Motor neuron (in vitro differentiated cells): ENCODE measurements at regions of chr11 and their contacts with region 1.

Region 1: GRCh38 chr11:88543902-88544655 is 206.5 kb upstream of the CTSC start:
- ATAC-seq: peak; percentile 91 to 100 (median 100)
- H3K4me3 ChIP-seq: no peak overlapping the region
- H3K27ac ChIP-seq: no peak overlapping the region
- H3K4me1 ChIP-seq: no peaks in the 10 kb centered on the region

Region 2: GRCh38 chr11:87352759-87353707 is 1191.0 kb before region 1 on chr11:
- in situ Hi-C with region 1: loop called in 1 of 9 experiments (anchors 25 kb)
- ATAC-seq: peak; percentile 94 to 99 (median 98)
- H3K4me3 ChIP-seq: no peak overlapping the region
- H3K27ac ChIP-seq: no peak overlapping the region
- H3K4me1 ChIP-seq: no peaks in the 10 kb centered on the region

Region 3: GRCh38 chr11:87878373-87878779 is 665.7 kb before region 1 on chr11:
- in situ Hi-C with region 1: loop called in 1 of 9 experiments (anchors 25 kb)
- ATAC-seq: peak in 3 of 8 experiments; percentile 69 to 78 (median 73)
- H3K4me3 ChIP-seq: no peak overlapping the region
- H3K27ac ChIP-seq: no peak overlapping the region
- H3K4me1 ChIP-seq: peaks cover 0 to 3% of the 10 kb centered on the region in 2 donors

Region 4: DNA sequence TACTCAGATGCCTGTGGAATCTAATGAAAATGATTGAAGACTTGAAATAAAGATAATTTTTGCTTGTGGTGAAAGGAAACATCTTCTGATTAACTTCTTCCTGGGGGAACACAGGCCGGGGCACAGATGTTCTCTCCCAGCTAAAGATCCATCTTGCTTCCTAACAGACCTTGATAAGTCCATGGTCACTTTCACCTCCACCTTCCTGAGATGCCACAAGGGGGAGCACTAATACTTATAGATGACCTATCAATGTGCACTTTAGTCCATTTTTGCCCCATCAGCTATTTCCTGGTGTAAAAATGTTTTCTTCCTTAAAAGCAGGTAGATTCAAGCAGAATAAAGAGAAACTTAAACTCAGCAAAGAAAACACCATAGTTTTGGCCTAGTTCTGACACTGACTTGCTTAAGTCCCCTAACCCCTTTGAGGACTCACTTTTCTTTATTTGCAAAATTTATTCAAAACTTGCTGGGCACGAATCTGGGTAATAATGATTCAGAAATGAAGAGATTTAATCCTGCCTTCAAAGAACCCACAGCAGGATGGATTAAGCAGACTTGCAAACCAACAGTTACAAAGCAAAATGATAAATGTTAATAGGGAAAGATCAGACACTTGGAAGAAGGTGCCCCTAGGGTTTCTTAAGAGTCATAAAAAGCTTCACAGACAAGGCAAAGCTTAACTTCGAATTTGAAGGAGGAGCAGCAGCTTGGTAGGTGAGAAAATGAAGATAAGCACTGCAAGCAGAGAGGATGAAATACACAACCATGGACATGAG is 527.5 kb before region 1 on chr11:
- in situ Hi-C with region 1: loop called in 6 of 9 experiments (anchors 25 kb)
- ATAC-seq: peak in 7 of 8 experiments; percentile 50 to 94 (median 75)
- H3K4me3 ChIP-seq: no peak overlapping the region
- H3K27ac ChIP-seq: no peak overlapping the region
- H3K4me1 ChIP-seq: peaks cover 0 to 12% of the 10 kb centered on the region in 2 donors

Region 5: GRCh38 chr11:88098289-88098688 is 445.8 kb before region 1 on chr11:
- in situ Hi-C with region 1: loop called in 1 of 9 experiments (anchors 25 kb)
- ATAC-seq: no peak
- H3K4me3 ChIP-seq: no peak overlapping the region
- H3K27ac ChIP-seq: no peak overlapping the region
- H3K4me1 ChIP-seq: no peaks in the 10 kb centered on the region

Region 6: DNA sequence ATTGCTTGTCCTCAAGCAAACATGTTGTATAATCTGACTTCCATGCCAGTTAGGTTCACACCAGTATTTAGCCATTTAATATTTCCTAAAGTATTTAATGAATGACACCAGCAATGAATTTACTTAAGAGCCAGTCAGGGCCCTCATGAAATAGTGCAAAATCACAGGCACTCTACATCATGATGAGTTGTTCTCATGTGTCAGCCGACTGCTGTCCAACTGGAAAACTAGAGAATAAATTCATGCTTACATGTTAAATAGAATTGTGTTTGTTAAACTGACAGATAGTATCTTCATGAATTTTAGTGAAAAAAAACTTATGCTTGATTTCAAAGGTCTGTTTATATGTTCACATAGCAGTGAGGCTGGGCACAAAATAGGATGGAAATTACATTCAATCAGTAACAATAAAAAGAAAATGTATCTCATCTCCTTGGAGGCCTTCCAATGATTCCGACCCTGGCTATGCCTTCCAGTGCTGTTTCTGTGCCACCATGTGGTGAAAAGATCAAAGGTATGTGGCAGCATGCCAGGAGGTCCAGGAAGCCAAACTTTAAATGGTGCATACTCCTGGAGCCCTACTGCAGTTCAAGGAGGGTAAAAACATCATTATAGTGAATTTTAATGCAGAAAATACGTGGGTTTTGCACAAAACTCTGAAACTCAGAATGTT is 251.8 kb before region 1 on chr11:
- in situ Hi-C with region 1: loop called in 1 of 9 experiments (anchors 25 kb)
- ATAC-seq: peak in 3 of 8 experiments; percentile 45 to 91 (median 69)
- H3K4me3 ChIP-seq: no peak overlapping the region
- H3K27ac ChIP-seq: no peak overlapping the region
- H3K4me1 ChIP-seq: peaks cover 3 to 7% of the 10 kb centered on the region in 2 donors